GM12878 (cell line): ENCODE measurements at regions of chr14 and their contacts with region 1.

Region 1: GRCh38 chr14:22491683-22492621 is 97.1 kb downstream of the DAD1 start:
- DNase-seq: no peak
- ATAC-seq: peak; percentile 57
- H3K4me3 ChIP-seq: peak overlapping the region; percentile 45
- H3K27ac ChIP-seq: peak overlapping the region; percentile 98
- H3K4me1 ChIP-seq: peaks cover 86% of the 10 kb centered on the region
- H3K27me3 ChIP-seq: no peaks in the 10 kb centered on the region
- CTCF ChIP-seq: no peak
- EP300 ChIP-seq: peak; percentile 69 to 92; a peak in 3 of 4 replicates
- POLR2A ChIP-seq: peak; percentile 68
- RAD21 ChIP-seq: peak; percentile 26; the same call in 1 of the 2 replicates

Region 2: DNA sequence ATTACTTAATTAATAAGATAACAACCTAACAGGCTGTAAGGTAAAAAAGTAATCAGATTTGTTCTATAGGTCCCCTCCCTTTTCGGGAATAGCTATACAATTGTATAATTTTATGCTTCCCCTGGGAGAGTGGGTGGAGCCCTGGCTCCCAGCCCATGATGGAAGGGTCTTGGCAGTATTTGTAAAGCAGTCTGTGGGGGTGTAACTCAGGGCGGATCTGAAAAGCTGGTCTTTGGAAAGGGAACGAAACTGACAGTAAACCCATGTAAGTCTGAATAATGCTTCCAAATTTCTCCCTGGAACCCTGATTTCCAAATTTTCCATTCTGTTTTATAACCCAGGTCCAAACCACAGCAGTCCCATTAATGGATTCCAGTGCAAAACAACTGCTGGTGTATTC is 13.3 kb before region 1 on chr14:
- CTCF ChIA-PET with region 1: interaction called, 171 read pairs
- POLR2A ChIA-PET with region 1: interaction called, 875 read pairs
- RAD21 ChIA-PET with region 1: interaction called, 797 read pairs
- SMC1A ChIA-PET with region 1: interaction called, 288 read pairs
- in situ Hi-C with region 1: no loop called
- intact Hi-C with region 1: no loop called
- DNase-seq: no peak
- ATAC-seq: peak; percentile 5; the same call in 1 of the 3 replicates
- H3K4me3 ChIP-seq: peak overlapping the region; percentile 66; the same call in 1 of the 2 replicates
- H3K27ac ChIP-seq: peak overlapping the region; percentile 98
- H3K4me1 ChIP-seq: peaks cover 71% of the 10 kb centered on the region
- H3K27me3 ChIP-seq: no peaks in the 10 kb centered on the region
- CTCF ChIP-seq: no peak
- EP300 ChIP-seq: 0 out of 4 replicates have a peak, but pooled peaks of 1 of the 2 experiments have one; percentile 1
- POLR2A ChIP-seq: no peak
- RAD21 ChIP-seq: no peak

Region 3: GRCh38 chr14:22519877-22520685 is 28.1 kb after region 1 on chr14:
- CTCF ChIA-PET with region 1: interaction called, 3 read pairs
- POLR2A ChIA-PET with region 1: interaction called, 875 read pairs
- RAD21 ChIA-PET with region 1: interaction called, 797 read pairs
- SMC1A ChIA-PET with region 1: interaction called, 139 read pairs
- in situ Hi-C with region 1: no loop called
- intact Hi-C with region 1: no loop called
- DNase-seq: no peak
- ATAC-seq: no peak
- H3K4me3 ChIP-seq: peak overlapping the region; percentile 15; the same call in 1 of the 2 replicates
- H3K27ac ChIP-seq: peak overlapping the region; percentile 80
- H3K4me1 ChIP-seq: peaks cover 99% of the 10 kb centered on the region
- H3K27me3 ChIP-seq: no peaks in the 10 kb centered on the region
- CTCF ChIP-seq: no peak
- EP300 ChIP-seq: no peak
- POLR2A ChIP-seq: no peak
- RAD21 ChIP-seq: no peak

Region 4: DNA sequence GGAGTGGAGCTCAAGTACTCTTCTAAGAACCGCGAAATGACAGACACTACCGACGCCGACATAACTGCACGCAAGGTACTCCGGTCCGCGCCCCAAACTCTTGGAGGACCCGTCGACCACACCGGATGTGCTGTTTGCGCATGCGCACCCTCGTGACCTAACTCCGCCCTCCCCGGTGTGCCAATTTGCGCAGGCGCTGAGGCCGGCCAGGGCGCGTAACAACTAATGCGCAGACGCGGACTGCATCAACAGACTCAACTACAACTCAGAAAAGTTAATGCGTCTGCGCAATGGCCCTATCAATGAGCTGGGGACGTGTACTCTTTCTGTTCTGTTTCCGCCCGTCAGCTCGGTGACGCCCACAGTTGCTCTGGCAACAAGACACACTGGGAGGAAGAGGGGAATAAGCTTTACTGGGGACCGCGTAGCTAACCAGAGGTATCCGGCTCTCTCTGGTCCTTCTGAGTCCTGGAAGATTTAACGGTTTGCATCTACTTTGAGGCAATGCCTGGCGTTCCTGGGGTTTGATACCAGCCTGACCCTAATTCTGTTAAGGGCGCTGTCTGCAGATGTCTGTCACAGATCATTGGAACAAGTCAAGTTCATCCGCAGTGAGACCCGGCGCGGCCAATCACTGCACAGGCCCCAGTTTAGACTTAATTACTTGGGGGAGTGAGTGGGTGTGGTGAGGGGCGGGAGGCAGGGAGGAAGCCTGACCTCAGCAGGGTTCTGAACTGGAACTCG is 97.3 kb after region 1 on chr14 and contains the start of gene DAD1:
- CTCF ChIA-PET with region 1: no interaction called
- POLR2A ChIA-PET with region 1: no interaction called
- RAD21 ChIA-PET with region 1: no interaction called
- SMC1A ChIA-PET with region 1: no interaction called
- in situ Hi-C with region 1: no loop called
- intact Hi-C with region 1: no loop called
- DNase-seq: peak; percentile 100
- ATAC-seq: peak; percentile 93
- H3K4me3 ChIP-seq: peak within 1 kb of the TSS; percentile 92
- H3K27ac ChIP-seq: peak within 1 kb of the TSS; percentile 91
- H3K4me1 ChIP-seq: peaks cover 20% of the 10 kb centered on the region
- H3K27me3 ChIP-seq: no peaks in the 10 kb centered on the region; a peak in 1 of 4 replicates
- CTCF ChIP-seq: 0 out of 6 replicates have a peak, but pooled peaks of 1 of the 3 experiments have one; percentile 13
- EP300 ChIP-seq: no peak; a peak in 1 of 4 replicates
- POLR2A ChIP-seq: peak; percentile 98
- RAD21 ChIP-seq: no peak
- polyA plus RNA-seq, gene DAD1: 711 to 920 TPM